WTC11 (cell line): ENCODE measurements at regions of chr10 and their contacts with region 1.

Region 1: GRCh38 chr10:100518761-100519241 is 860 bp downstream of the SEC31B start:
- DNase-seq: peak; percentile 69
- ATAC-seq: peak; percentile 36
- H3K4me3 Mint-ChIP-seq: peak overlapping the region; percentile 91
- H3K27ac Mint-ChIP-seq: no peak overlapping the region
- H3K4me1 Mint-ChIP-seq: 0 out of 2 replicates have a peak, but pooled peaks cover 8% of the 10 kb centered on the region
- H3K27me3 Mint-ChIP-seq: peaks cover 42% of the 10 kb centered on the region
- CTCF ChIP-seq: peak; percentile 56; the same call in 1 of the 2 replicates

Region 2: DNA sequence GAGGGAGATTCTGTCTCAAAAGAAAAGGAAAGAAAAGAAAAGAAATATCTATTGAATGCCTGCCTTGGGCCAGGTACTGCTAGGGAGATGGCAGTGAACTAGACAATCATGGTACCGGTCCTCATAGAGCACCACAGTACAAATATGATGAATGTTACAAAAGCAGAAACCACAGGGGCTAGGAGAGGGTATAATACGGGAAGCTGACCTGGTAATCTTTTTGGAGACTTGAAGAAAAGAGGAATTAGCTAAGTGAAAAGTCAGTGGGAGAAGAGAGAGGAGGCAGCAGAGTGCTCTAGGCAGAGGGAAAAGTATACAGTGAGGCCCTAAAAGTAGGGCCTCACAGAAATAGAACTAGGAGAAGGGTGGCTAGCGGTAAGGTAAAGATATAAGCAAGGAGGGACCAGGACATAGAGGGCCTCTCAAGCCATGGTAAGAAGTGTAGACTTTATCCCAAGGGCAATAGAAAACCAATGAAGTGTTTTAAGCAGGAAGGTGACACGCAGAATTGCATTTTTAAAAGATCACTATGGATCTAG is 98.8 kb before region 1 on chr10:
- CTCF ChIA-PET with region 1: interaction called, 12 read pairs
- POLR2A ChIA-PET with region 1: no interaction called
- DNase-seq: no peak
- ATAC-seq: no peak
- H3K4me3 Mint-ChIP-seq: no peak overlapping the region
- H3K27ac Mint-ChIP-seq: no peak overlapping the region
- H3K4me1 Mint-ChIP-seq: no peaks in the 10 kb centered on the region
- H3K27me3 Mint-ChIP-seq: peaks cover 8% of the 10 kb centered on the region
- CTCF ChIP-seq: no peak

Region 3: GRCh38 chr10:100470367-100470766 is 48.4 kb before region 1 on chr10:
- CTCF ChIA-PET with region 1: interaction called, 22 read pairs
- POLR2A ChIA-PET with region 1: no interaction called
- DNase-seq: no peak
- ATAC-seq: no peak
- H3K4me3 Mint-ChIP-seq: no peak overlapping the region
- H3K27ac Mint-ChIP-seq: no peak overlapping the region
- H3K4me1 Mint-ChIP-seq: no peaks in the 10 kb centered on the region
- H3K27me3 Mint-ChIP-seq: peaks cover 90% of the 10 kb centered on the region
- CTCF ChIP-seq: no peak

Region 4: GRCh38 chr10:100508691-100509150 is 10.1 kb before region 1 on chr10:
- CTCF ChIA-PET with region 1: interaction called, 96 read pairs
- POLR2A ChIA-PET with region 1: no interaction called
- DNase-seq: no peak
- ATAC-seq: peak; percentile 93
- H3K4me3 Mint-ChIP-seq: no peak overlapping the region
- H3K27ac Mint-ChIP-seq: no peak overlapping the region
- H3K4me1 Mint-ChIP-seq: peaks cover 6% of the 10 kb centered on the region; the same call in 1 of the 2 replicates
- H3K27me3 Mint-ChIP-seq: peaks cover 60% of the 10 kb centered on the region
- CTCF ChIP-seq: peak; percentile 47; the same call in 1 of the 2 replicates

Region 5: GRCh38 chr10:100743626-100744135 is 224.9 kb after region 1 on chr10:
- CTCF ChIA-PET with region 1: interaction called, 13 read pairs
- POLR2A ChIA-PET with region 1: no interaction called
- DNase-seq: peak; percentile 57
- ATAC-seq: peak; percentile 3; the same call in 1 of the 2 replicates
- H3K4me3 Mint-ChIP-seq: peak overlapping the region; percentile 52
- H3K27ac Mint-ChIP-seq: no peak overlapping the region
- H3K4me1 Mint-ChIP-seq: peaks cover 65% of the 10 kb centered on the region
- H3K27me3 Mint-ChIP-seq: peaks cover 96% of the 10 kb centered on the region
- CTCF ChIP-seq: peak; percentile 58; the same call in 1 of the 2 replicates